WTC11 (cell line): ENCODE measurements at regions of chr16 and their contacts with region 1.

Region 1: DNA sequence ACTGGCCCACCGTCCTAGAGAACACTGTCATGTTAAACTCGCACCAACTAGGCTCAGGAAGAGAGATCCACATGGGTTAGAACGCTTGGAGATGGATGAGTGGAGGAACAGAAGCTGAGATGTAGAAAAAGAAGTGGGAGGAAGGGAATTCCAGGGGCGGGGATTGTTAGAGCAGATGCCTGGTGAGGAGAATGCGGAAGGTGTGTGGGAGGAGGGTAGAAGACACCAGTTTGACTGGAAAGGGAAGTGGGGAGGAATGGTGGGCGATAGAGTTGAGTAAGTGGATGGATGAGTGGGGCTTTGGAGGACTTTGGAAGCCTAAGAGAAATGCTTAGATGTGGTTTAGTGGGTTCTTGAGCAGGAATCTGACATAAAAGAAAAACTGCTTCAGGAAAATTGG is 37.4 kb downstream of the DHX38 start:
- DNase-seq: no peak
- ATAC-seq: peak; percentile 30; the same call in 1 of the 2 replicates
- H3K4me3 Mint-ChIP-seq: no peak overlapping the region
- H3K27ac Mint-ChIP-seq: no peak overlapping the region
- H3K4me1 Mint-ChIP-seq: peaks cover 18% of the 10 kb centered on the region
- H3K27me3 Mint-ChIP-seq: no peaks in the 10 kb centered on the region; the same call in 1 of the 2 replicates
- CTCF ChIP-seq: no peak

Region 2: DNA sequence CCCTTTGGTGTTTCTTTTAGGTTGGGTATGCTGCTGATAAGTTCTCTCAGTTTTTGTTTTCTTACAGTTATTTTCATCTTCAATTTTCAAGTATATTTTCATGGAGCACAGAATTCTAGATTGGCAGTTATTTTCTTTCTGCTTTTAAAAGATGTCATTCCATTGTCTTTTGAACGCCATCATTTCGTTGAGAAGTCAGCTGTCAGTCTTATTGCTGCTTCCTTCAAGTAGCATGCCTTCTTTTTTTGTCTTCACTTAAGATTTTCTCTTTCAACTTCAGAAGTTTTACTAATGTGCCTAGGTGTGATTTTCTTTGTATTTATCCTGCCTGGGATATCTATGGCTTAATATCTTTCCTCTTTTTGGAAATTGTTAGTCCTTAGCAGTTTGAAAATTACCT is 303.1 kb after region 1 on chr16:
- CTCF ChIA-PET with region 1: no interaction called
- POLR2A ChIA-PET with region 1: interaction called, 10 read pairs
- DNase-seq: no peak
- ATAC-seq: no peak
- H3K4me3 Mint-ChIP-seq: no peak overlapping the region
- H3K27ac Mint-ChIP-seq: no peak overlapping the region
- H3K4me1 Mint-ChIP-seq: no peaks in the 10 kb centered on the region
- H3K27me3 Mint-ChIP-seq: no peaks in the 10 kb centered on the region
- CTCF ChIP-seq: no peak